ENCODE measurements at regions of chr11 and their contacts with region 1.

Region 1: GRCh38 chr11:63681321-63682049 is at the start of gene RTN3:
- DNase-seq: peak; percentile 95 to 100 (median 96)

Region 2: GRCh38 chr11:63564056-63564774 is 117.3 kb before region 1 on chr11:
- intact Hi-C with region 1: no loop called
- DNase-seq: peak in 1 of 10 donors; percentile 53

Region 3: DNA sequence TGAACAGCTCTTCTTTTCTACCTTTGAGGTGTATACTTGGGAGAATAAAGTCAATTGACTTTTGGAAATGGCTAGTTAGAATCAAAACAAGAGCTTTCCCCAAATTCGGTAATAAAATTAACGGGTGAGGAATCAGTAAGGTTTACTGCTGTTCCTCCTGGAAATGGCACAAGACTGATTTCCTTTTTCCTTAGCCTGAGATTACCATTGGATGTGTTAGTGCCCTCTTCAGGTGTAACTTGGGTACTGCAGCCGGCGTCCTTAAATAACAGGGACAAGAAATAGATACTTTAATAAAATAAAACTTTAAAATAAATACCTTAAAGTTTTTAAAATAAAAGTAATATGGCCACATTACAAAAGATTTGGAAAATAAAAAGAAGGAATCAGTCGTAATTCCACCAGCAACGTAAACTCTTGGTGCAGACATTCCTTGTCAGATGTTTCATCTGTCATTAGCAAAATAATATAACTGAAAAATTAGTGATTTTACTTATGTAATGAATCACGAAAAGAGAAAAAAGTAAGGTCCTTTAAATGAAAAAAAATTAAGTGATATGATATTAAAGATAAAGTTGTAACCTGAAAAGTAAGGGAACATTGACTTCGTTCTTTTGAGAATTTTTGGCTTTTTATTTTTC is 57.4 kb after region 1 on chr11:
- intact Hi-C with region 1: loop called (anchors 5 kb)
- DNase-seq: peak in 8 of 10 donors; percentile 23 to 88 (median 78)

Region 4: DNA sequence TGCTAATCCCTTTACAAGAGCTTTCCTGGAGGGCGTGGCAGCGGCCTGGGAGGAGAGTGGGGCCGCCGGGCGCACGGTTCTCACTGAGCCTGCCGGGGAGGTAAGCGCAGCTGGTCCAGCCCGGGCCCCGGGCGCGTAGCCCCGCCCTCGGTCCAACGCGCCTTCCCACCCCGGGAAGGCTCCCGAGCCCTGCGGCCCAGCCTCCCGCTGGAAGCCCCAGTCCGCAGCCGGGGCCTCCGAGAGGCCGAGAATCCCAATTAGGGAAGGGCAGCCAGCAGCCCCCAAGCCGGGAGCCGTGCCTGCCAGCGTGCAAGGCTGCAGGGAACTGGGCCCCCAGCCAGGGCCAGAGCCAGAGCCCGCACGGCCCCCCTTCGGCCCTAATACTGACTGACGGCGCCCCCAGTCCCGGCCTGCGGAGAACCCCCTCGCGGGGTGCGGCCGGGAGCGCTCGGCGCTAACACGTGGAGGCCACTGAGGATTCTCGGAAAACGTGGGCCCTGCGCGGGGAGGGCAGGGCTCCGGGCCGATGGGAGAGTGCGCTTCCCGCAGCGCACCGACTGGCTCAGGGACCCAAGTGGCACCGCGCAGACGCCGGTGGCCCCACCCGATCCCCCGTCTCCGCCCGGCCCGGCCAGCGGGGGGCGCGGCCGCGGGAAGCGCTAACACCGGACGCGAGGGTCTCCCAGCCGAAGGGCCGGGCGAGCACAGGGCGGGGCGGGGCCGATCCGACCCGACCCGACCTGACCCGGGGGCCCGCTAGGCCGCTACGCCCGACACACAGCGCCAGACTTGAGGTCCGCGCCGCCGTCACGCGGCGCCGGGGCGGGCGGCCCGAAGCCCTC is 81.4 kb after region 1 on chr11:
- intact Hi-C with region 1: loop called (anchors 5 kb)
- DNase-seq: peak in 9 of 10 donors; percentile 45 to 93 (median 65)

Region 5: DNA sequence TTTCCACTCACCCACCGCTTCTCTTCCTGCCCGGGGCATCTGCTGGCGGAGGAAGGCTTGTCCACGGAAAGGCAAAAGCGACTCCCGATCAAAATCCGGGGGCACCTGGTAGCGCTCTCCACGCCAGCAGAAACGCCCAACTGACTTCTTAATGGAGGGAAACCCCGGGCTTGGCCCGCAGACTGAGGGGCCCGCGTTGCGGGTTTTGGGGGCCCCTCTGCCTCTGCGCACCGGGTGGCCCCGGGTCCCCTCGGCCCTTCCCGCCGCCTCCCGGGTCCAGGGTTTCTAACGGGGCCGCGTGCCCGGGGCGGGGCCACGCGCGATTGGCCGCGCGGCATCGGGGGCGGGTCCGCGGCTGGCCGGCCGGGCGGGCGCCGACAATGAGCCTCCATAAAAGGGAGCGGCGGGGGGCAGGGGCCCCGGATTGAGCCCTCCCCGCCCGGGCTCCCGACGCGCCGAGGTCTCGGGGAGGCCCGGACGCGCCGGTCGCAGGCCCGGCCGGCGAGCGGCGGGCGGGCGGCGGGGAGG is 131.6 kb after region 1 on chr11 and contains the start of gene SPINDOC:
- intact Hi-C with region 1: loop called (anchors 5 kb)
- DNase-seq: peak; percentile 69 to 98 (median 82)

Region 6: DNA sequence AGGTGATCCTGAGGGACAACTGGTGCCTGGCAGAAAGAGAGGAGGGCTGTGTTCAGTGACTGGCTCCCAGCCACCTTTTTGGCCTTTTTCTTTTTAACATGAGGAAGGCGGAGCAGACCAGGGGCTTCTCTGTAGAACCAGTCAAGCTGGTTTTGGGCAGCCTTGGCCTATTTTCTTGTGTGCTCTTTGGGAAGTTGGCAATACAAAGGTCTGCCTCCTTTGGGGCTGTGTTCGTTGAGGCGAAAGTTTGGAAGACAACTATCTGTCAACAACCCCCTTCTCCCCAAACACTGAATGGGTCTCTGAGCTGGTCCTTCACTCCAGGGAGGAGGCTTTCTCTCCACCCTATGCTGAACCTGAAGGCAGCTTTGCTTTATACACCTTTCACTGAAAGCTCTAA is 165.9 kb after region 1 on chr11:
- intact Hi-C with region 1: no loop called
- DNase-seq: peak in 2 of 10 donors; percentile 8 to 15

Measured in posterior cingulate gyrus (tissue), 11 donors.